Activated CD4-positive, alpha-beta T cell treated with anti-CD3 and anti-CD28 coated beads, Interleukin-2, amount 10 ng/mL, durations not matched to agents 7 days and 5 days (primary cell): ENCODE measurements at regions of chr13 and their contacts with region 1.

Region 1: DNA sequence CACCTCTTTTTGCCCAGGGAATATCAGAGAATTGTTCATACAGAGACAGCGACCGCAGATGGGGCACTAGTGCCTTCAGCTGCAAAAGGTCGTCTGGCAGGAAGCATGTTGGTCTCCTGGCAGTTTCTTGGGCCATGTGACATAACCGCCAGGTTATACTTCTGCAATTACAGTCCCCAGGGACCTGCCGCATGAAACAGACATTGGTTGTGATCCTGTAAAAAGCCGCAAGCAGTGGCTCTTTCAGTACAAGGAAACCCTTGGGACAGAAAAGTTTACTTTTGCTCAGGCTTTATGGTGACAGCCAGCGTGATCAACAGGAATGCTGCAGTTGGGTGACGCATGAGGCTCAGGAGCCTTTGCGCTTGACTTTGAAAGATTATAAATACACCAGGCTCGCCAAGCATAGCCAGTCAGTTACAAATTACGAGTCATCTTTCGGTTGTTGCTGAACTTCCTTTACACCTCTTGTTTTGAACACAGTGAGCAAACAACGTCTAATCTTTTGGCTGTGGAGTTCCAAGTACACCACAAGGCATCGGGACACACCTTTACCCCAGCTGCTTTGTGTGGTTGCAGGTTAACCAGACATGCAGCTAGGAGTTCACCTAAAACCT is 50.5 kb upstream of the UBE2L5 start:
- DNase-seq: peak; percentile 84
- H3K4me3 Mint-ChIP-seq: peak overlapping the region; percentile 80
- H3K27ac Mint-ChIP-seq: peak overlapping the region; percentile 93
- H3K4me1 Mint-ChIP-seq: peaks cover 82% of the 10 kb centered on the region
- H3K27me3 Mint-ChIP-seq: no peaks in the 10 kb centered on the region

Region 2: GRCh38 chr13:30388406-30389283 is 16.9 kb after region 1 on chr13:
- CTCF ChIA-PET with region 1: interaction called, 19 read pairs
- POLR2A ChIA-PET with region 1: interaction called, 7 read pairs
- DNase-seq: no peak
- H3K4me3 Mint-ChIP-seq: peak overlapping the region; percentile 51
- H3K27ac Mint-ChIP-seq: peak overlapping the region; percentile 94
- H3K4me1 Mint-ChIP-seq: peaks cover 66% of the 10 kb centered on the region
- H3K27me3 Mint-ChIP-seq: no peaks in the 10 kb centered on the region

Region 3: DNA sequence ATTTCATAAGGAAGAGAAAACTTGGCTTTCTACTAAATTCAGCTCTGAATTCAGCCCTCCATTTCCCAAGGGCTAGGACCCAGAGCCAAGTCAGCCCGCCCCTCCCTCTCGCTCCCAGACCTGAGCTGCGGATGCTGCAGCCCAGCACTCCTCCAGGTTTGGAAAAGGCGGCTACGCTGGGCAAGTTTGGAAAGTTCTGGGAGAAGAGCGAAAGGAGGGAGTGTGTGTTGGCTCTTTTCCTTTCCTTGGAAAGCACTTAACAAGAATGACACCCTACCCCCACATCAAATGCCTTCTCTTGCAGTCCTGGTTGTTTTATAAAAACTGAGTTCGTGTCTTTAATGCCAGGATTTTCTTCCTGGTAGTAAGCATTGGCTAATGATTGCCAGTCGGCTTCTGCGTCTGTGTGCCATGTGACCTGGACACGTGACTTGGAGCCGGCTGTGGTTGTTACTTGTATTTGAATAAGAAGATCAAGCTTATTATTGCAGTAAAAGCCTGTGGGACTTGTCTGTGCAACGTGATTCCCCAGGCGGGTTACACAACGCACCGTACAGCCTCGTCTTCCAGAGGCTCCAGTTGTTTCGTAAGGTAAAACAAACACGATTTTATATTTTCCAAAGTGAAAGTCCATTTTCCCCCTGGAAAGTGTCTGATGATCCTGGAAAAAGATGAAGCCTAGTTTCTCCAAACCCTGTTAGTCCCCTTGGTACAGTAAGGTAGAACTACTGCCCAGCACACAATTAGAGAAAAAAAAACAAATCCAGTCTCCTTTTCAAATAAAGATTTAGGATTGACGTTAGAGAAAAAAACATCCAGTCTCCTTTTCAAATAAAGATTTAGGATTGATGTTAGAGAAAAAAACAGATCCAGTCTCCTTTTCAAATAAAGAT is 23.7 kb after region 1 on chr13:
- CTCF ChIA-PET with region 1: interaction called, 13 read pairs
- POLR2A ChIA-PET with region 1: interaction called, 7 read pairs
- DNase-seq: peak; percentile 82
- H3K4me3 Mint-ChIP-seq: peak overlapping the region; percentile 79
- H3K27ac Mint-ChIP-seq: peak overlapping the region; percentile 100
- H3K4me1 Mint-ChIP-seq: peaks cover 62% of the 10 kb centered on the region
- H3K27me3 Mint-ChIP-seq: no peaks in the 10 kb centered on the region

Region 4: DNA sequence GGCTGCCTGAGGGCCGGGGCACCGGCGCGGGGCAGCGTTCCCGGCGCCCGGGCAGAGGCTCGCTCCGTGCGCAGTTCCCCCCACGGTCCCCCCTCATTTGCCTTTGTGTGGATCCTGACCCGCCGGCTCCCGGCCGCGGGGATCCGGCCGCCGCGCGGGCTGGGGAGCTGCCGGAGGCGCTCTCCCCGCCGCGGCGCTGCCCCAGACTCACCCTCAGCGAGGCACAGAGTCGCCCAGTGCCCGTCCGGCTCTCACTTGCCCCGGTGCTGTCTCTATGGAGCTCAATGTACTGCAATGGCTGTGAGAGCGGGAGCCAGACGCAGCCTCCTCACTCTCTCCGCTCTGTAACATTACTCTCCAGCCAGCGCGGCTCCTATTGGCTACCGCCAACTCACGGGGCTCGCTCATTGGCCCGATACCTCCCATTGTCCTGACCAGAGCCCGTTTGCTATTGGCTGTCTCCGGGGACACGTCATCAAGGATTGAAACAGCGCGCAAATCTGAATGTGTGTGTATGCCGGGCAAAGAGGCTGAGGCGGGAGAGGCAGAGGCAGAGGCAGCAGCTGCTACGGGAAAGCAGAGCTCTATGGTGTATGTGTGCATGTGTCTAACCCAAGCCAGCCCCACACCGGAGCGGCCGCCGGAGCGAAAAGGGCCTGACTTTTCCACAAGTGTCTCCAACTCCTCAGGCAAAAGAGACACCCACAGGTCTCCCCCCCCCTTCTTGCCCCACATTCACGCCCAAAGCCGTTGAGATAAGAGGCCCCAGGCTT is 94.0 kb after region 1 on chr13 and contains the start of gene HMGB1:
- CTCF ChIA-PET with region 1: interaction called, 4 read pairs
- POLR2A ChIA-PET with region 1: interaction called, 10 read pairs
- DNase-seq: peak; percentile 99
- H3K4me3 Mint-ChIP-seq: peak within 1 kb of the TSS; percentile 84
- H3K27ac Mint-ChIP-seq: peak within 1 kb of the TSS; percentile 99
- H3K4me1 Mint-ChIP-seq: peaks cover 34% of the 10 kb centered on the region
- H3K27me3 Mint-ChIP-seq: no peaks in the 10 kb centered on the region
- total RNA-seq, gene HMGB1: 709 to 827 TPM

Region 5: DNA sequence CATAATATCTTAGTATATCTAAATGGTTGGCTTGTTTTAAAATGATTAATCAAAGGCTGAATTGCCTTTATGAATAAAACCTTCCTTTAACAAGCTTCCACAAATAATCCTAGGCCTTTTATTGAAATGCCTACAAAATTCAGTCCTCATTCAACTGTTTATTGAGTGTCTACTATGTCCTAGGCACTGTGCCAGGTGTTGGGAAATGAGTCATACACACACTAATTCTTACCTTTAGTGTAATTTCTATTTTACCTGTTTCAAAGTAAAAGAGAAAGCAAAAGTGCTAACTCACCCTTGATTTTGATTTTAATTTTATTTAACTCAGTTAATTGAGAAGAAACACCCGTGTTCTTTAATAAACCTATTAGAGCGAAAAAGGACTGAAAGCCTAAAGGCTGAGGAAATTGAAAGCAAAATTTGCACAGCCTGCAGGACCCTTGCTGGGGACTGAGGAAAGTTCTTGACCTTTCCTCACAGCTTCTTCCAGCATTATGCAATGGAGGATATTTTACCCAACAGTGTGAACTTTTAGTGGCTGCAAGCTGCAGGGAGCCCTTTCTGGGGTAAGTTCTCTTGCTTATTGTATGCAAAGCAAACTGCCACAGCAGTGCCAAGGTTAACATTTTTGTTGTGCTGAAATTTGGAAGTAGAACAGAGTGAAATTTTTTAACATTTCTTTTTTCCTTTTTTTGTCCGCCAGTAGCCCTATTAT is 911.1 kb after region 1 on chr13:
- CTCF ChIA-PET with region 1: no interaction called
- POLR2A ChIA-PET with region 1: no interaction called
- DNase-seq: no peak
- H3K4me3 Mint-ChIP-seq: no peak overlapping the region
- H3K27ac Mint-ChIP-seq: no peak overlapping the region
- H3K4me1 Mint-ChIP-seq: no peaks in the 10 kb centered on the region
- H3K27me3 Mint-ChIP-seq: no peaks in the 10 kb centered on the region